ENCODE measurements at regions of chr19 and their contacts with region 1.

Region 1: GRCh38 chr19:18846862-18847548 is 15.2 kb downstream of the UPF1 start:
- H3K4me3 Mint-ChIP-seq: no peak overlapping the region
- H3K27ac Mint-ChIP-seq: peak overlapping the region; percentile 90
- H3K4me1 Mint-ChIP-seq: peaks cover 88% of the 10 kb centered on the region
- H3K27me3 Mint-ChIP-seq: no peaks in the 10 kb centered on the region

Region 2: DNA sequence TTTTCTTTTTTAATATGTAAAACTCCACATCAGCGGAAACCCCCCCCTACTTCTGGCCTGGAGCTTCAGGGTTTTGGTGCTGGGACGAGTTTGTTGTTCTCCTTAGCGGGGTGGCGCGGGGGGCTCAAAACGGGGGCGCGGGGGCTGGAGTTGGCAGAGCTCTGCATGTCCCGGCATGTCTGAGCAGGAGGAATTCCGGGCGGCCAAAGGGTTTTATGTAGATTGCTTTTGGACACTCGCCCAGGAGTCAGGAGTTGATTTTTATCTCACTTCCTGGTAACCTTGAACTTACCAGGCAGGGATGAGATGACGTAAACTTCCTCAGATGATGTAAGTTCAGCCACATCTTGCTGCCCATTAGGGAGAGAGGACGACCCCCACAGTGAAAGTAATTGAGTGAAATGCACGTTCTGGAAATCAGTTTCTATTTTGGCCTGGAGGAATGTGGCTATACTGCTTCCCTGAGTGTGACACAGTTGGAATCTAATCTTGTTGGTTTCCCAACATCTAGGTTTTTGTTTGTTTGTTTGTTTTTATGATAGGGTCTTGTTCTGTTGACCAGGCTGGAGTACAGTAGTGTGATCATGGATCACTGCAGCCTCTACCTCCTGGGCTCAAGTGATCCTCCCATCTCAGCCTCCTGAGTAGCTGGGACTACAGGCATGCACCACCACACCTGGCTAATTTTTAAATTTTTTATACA is 482.0 kb before region 1 on chr19:
- intact Hi-C with region 1: no loop called
- H3K4me3 Mint-ChIP-seq: peak overlapping the region; percentile 34
- H3K27ac Mint-ChIP-seq: peak overlapping the region; percentile 75
- H3K4me1 Mint-ChIP-seq: peaks cover 50% of the 10 kb centered on the region
- H3K27me3 Mint-ChIP-seq: no peaks in the 10 kb centered on the region

Region 3: DNA sequence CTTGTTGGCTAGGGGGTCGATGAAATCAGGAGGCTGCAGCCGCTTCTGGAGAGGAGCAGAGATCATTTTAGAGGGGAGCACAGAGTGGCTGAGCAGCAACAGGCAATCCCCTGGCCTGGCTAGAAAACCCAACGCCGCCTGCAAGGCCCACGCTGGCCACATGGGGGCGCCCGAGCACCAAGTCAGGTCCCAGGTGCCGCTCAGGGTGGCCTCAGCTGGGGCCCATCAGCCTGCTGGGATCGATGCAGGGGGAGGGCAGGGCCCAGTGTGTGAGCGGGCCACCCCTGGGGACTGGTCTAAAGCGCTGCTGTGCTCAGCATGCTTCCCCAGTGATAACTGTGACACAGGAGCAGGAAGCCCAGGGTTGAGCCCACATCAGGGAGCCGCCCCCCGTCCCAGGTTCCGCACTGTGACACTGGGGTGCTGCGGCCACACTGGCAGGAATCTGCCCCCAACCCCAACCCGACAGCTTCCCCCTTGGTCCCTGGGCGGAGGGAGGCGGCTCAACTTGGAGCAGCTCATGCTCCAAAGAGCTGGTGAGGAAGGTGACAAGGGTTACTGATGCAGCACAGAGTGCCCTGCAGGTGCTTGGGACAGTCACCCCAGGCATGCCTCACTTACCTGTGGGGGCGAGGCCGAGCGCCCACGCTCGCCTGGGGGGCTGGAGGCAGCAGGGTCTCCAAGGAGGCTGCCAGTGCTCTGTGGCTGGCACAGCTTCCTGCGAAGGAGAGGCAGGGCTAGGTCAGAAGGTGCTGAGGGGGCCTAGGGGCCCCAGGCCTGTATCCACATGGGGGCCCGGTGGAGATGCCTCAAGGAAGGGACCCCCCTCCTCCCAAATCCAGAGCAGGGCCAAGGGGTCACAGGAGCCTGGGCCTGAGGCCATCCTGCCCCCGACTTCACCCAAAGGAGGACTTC is 395.8 kb before region 1 on chr19:
- intact Hi-C with region 1: loop called (anchors 5 kb)
- H3K4me3 Mint-ChIP-seq: no peak overlapping the region
- H3K27ac Mint-ChIP-seq: peak overlapping the region; percentile 11
- H3K4me1 Mint-ChIP-seq: peaks cover 20% of the 10 kb centered on the region
- H3K27me3 Mint-ChIP-seq: no peaks in the 10 kb centered on the region

Region 4: GRCh38 chr19:18795540-18795939 is 51.5 kb before region 1 on chr19:
- intact Hi-C with region 1: no loop called
- H3K4me3 Mint-ChIP-seq: no peak overlapping the region
- H3K27ac Mint-ChIP-seq: no peak overlapping the region
- H3K4me1 Mint-ChIP-seq: peaks cover 8% of the 10 kb centered on the region
- H3K27me3 Mint-ChIP-seq: peaks cover 57% of the 10 kb centered on the region

Region 5: GRCh38 chr19:18831524-18832305 is 15.3 kb before region 1 on chr19 and contains the start of gene UPF1:
- intact Hi-C with region 1: loop called (anchors 2 kb)
- H3K4me3 Mint-ChIP-seq: peak within 1 kb of the TSS; percentile 95
- H3K27ac Mint-ChIP-seq: peak within 1 kb of the TSS; percentile 87
- H3K4me1 Mint-ChIP-seq: peaks cover 49% of the 10 kb centered on the region
- H3K27me3 Mint-ChIP-seq: peaks cover 12% of the 10 kb centered on the region

Region 6: DNA sequence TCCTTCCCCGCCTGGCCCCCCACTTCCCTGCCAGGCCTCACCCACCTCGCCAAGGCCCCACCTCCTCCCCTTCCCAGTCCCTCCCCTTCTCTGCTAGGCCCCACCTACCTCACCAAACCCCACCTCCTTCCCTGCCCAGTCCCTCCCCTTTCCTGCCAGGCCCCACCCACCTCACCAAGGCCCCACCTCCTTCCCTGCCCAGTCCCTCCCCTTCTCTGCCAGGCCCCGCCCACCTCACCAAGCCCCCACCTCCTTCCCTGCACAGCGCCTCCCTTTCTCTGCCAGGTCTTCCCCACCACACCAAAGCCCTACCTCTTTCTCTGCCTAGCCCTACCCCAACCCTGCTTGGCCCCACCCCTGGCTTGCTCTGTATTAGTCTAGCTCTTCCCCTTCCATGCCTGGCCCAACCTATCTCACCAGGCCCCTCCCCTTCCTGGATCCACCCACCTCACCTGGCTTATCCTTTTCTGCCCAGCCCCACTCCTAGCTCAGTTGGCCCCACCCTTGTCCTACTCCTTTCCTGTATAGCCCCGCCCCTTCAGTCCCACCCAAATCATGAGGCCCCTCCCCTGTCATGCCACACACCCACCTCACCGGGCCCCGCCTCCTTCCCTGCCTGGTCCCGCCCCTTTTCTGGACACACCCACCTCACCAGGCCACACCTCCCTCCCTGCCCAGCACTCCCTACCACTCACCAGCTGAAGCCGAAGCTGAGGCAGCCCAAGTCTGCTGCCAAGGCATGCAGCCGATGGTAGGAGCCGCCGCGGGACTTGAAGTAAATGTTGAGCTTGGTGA is 32.8 kb after region 1 on chr19:
- intact Hi-C with region 1: no loop called
- H3K4me3 Mint-ChIP-seq: no peak overlapping the region
- H3K27ac Mint-ChIP-seq: no peak overlapping the region
- H3K4me1 Mint-ChIP-seq: no peaks in the 10 kb centered on the region
- H3K27me3 Mint-ChIP-seq: peaks cover 2% of the 10 kb centered on the region